Gastrocnemius medialis (tissue), 4 donors: ENCODE measurements at regions of chr10 and their contacts with region 1.

Region 1: GRCh38 chr10:78047314-78047891 is 13.7 kb downstream of the RPS24 start:
- DNase-seq: peak; percentile 57 to 72
- ATAC-seq: peak; percentile 87 to 91
- H3K4me3 ChIP-seq: no peak overlapping the region
- H3K27ac ChIP-seq: no peak overlapping the region
- H3K4me1 ChIP-seq: peaks cover 6 to 10% of the 10 kb centered on the region in 2 donors
- H3K27me3 ChIP-seq: no peaks in the 10 kb centered on the region
- CTCF ChIP-seq: peak; percentile 78 to 89 (median 82)
- POLR2A ChIP-seq: no peak

Region 2: DNA sequence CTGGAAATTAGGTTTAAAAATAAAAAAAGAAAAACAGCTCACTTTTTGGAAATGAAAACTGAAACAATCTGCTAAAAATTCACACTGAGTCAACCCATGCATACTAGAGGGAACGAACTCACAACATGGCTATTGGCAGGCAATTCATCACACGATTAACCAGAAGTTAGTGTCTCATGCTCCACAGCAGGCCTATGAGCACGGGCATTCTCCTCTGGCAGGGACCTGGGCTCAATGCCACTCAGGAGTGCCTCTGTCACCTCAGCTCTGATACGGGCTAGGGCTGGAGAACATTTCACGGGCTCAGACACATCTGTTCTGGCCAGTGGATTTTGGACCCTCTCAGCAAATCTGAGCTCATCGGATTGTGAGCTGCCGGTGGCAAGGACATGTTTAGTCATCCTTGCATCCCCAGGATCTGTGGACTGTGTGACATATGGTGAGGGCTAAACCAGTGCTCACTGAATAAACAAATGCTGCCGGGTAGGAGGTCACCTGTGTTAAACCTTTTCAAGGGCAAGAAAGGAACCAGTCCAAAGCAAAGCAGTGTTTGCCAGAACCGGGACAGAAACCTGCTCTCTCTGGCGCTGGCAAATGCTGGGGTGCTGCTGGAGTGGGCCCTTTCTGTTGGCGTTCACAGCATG is 58.2 kb before region 1 on chr10:
- in situ Hi-C with region 1: no loop called
- intact Hi-C with region 1: no loop called
- DNase-seq: peak; percentile 85 to 87
- ATAC-seq: peak; percentile 81 to 89
- H3K4me3 ChIP-seq: no peak overlapping the region
- H3K27ac ChIP-seq: peak overlapping the region; percentile 81 to 98 (median 90)
- H3K4me1 ChIP-seq: peaks cover 25 to 42% of the 10 kb centered on the region in 2 donors
- H3K27me3 ChIP-seq: no peaks in the 10 kb centered on the region
- CTCF ChIP-seq: no peak
- POLR2A ChIP-seq: peak in 1 of 2 donors; percentile 49

Region 3: GRCh38 chr10:78211561-78212051 is 164.2 kb after region 1 on chr10:
- in situ Hi-C with region 1: no loop called
- intact Hi-C with region 1: loop called (anchors 5 kb)
- DNase-seq: no peak
- ATAC-seq: no peak
- H3K4me3 ChIP-seq: no peak overlapping the region
- H3K27ac ChIP-seq: no peak overlapping the region
- H3K4me1 ChIP-seq: peaks cover 13 to 20% of the 10 kb centered on the region in 2 donors
- H3K27me3 ChIP-seq: no peaks in the 10 kb centered on the region
- CTCF ChIP-seq: peak in 3 of 5 experiments; percentile 22 to 30 (median 28)
- POLR2A ChIP-seq: no peak